Activated CD4-positive, alpha-beta memory T cell treated with anti-CD3 and anti-CD28 coated beads for 36 hours (primary cell): ENCODE measurements at regions of chr14 and their contacts with region 1.

Region 1: GRCh38 chr14:75522224-75522982 is at the start of gene BATF:
- DNase-seq: peak; percentile 89
- H3K4me3 Mint-ChIP-seq: peak within 1 kb of the TSS; percentile 99
- H3K27ac Mint-ChIP-seq: peak within 1 kb of the TSS; percentile 100
- H3K4me1 Mint-ChIP-seq: peaks cover 64% of the 10 kb centered on the region
- H3K27me3 Mint-ChIP-seq: no peaks in the 10 kb centered on the region
- total RNA-seq, gene BATF: 171 to 182 TPM

Region 2: GRCh38 chr14:75126679-75127473 is 395.5 kb before region 1 on chr14 and contains the start of gene NEK9:
- CTCF ChIA-PET with region 1: no interaction called
- POLR2A ChIA-PET with region 1: interaction called, 3 read pairs
- intact Hi-C with region 1: loop called (anchors 10 kb)
- DNase-seq: peak; percentile 94
- H3K4me3 Mint-ChIP-seq: peak within 1 kb of the TSS; percentile 99
- H3K27ac Mint-ChIP-seq: peak within 1 kb of the TSS; percentile 96
- H3K4me1 Mint-ChIP-seq: peaks cover 43% of the 10 kb centered on the region
- H3K27me3 Mint-ChIP-seq: no peaks in the 10 kb centered on the region
- total RNA-seq, gene NEK9: 51.8 to 56.4 TPM

Region 3: GRCh38 chr14:75487155-75487671 is 35.2 kb before region 1 on chr14:
- CTCF ChIA-PET with region 1: interaction called, 37 read pairs
- POLR2A ChIA-PET with region 1: interaction called, 4 read pairs
- intact Hi-C with region 1: loop called (anchors 5 kb)
- DNase-seq: peak; percentile 25
- H3K4me3 Mint-ChIP-seq: no peak overlapping the region
- H3K27ac Mint-ChIP-seq: peak overlapping the region; percentile 62
- H3K4me1 Mint-ChIP-seq: peaks cover 22% of the 10 kb centered on the region
- H3K27me3 Mint-ChIP-seq: peaks cover 2% of the 10 kb centered on the region

Region 4: GRCh38 chr14:75542588-75543091 is 20.2 kb after region 1 on chr14:
- CTCF ChIA-PET with region 1: interaction called, 88 read pairs
- POLR2A ChIA-PET with region 1: interaction called, 172 read pairs
- intact Hi-C with region 1: loop called (anchors 1 kb)
- DNase-seq: peak; percentile 95
- H3K4me3 Mint-ChIP-seq: peak overlapping the region; percentile 68
- H3K27ac Mint-ChIP-seq: peak overlapping the region; percentile 99
- H3K4me1 Mint-ChIP-seq: peaks cover 83% of the 10 kb centered on the region
- H3K27me3 Mint-ChIP-seq: no peaks in the 10 kb centered on the region

Region 5: DNA sequence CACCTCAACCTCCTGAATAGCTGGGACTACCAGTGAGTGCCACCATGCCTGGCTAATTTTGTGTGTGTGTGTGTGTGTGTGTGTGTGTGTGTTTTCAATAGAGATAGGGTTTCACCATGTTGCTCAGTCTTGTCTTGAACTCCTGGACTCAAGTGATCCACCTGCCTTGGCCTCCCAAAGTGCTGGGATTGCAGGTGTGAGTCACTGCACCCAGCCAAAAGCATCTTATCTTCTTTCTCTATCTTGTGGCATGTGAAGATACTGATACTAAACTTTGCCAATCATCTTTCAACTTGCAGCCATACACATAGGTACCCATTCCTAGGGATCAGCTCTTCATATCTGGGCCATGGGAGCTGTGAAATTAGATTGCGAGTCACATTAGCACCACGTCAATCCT is 33.4 kb after region 1 on chr14:
- CTCF ChIA-PET with region 1: interaction called, 83 read pairs
- POLR2A ChIA-PET with region 1: interaction called, 67 read pairs
- intact Hi-C with region 1: no loop called
- DNase-seq: peak; percentile 48
- H3K4me3 Mint-ChIP-seq: no peak overlapping the region
- H3K27ac Mint-ChIP-seq: peak overlapping the region; percentile 0
- H3K4me1 Mint-ChIP-seq: peaks cover 76% of the 10 kb centered on the region
- H3K27me3 Mint-ChIP-seq: no peaks in the 10 kb centered on the region

Region 6: DNA sequence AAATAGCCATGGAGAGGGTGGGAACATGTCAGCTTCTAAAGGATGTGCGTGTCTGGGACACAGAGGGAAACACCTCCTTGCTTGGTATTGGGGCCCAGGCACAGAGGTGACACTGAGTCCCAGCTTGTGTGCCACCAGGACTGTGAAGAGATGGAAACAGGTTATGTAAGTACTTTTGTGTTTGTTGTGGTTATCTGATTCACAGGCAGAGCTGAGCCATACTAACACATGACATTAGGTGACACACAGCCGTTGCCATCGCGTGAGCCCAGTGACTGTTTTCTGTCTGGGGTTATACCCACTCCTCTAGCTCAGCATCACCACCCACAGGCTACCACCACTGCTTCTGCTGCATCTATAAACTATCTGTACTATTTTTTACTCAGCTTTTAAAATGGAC is 43.9 kb after region 1 on chr14:
- CTCF ChIA-PET with region 1: interaction called, 83 read pairs
- POLR2A ChIA-PET with region 1: interaction called, 67 read pairs
- intact Hi-C with region 1: loop called (anchors 1 kb)
- DNase-seq: peak; percentile 94
- H3K4me3 Mint-ChIP-seq: peak overlapping the region; percentile 72
- H3K27ac Mint-ChIP-seq: peak overlapping the region; percentile 93
- H3K4me1 Mint-ChIP-seq: peaks cover 90% of the 10 kb centered on the region
- H3K27me3 Mint-ChIP-seq: no peaks in the 10 kb centered on the region

Region 7: DNA sequence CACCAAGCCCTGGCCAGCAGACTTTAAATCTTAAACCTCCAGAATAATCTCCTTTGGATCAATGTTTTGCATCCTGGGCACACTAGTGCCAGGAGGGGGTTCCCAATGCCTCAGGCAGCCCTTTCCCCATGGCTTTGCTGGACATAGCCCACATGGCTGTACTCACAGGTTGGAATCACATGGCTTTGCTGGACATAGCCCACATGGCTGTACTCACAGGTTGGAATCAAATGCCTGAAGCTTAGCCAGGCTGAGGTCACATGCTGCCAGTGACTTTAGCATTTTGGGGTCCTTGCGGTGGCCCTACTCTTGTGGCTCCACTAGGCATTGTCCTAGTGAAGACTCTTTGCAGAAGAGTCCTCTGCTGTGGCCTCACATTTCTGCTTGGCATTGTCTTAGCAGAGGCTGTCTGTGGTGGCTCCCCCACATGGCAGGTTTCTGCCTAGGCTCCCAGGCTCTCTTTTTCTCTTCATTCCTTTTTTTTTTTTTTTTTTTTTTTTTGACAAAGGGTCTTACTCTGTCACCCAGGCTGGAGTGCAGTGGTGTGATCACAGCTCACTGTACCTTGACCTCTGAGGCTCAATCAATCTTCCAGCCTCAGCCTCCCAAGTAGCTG is 69.0 kb after region 1 on chr14:
- CTCF ChIA-PET with region 1: no interaction called
- POLR2A ChIA-PET with region 1: no interaction called
- intact Hi-C with region 1: no loop called
- DNase-seq: no peak
- H3K4me3 Mint-ChIP-seq: no peak overlapping the region
- H3K27ac Mint-ChIP-seq: no peak overlapping the region
- H3K4me1 Mint-ChIP-seq: no peaks in the 10 kb centered on the region
- H3K27me3 Mint-ChIP-seq: no peaks in the 10 kb centered on the region

Region 8: GRCh38 chr14:75654127-75654732 is 131.8 kb after region 1 on chr14:
- CTCF ChIA-PET with region 1: interaction called, 16 read pairs
- POLR2A ChIA-PET with region 1: no interaction called
- intact Hi-C with region 1: loop called (anchors 1 kb)
- DNase-seq: peak; percentile 89
- H3K4me3 Mint-ChIP-seq: no peak overlapping the region
- H3K27ac Mint-ChIP-seq: no peak overlapping the region
- H3K4me1 Mint-ChIP-seq: peaks cover 16% of the 10 kb centered on the region
- H3K27me3 Mint-ChIP-seq: no peaks in the 10 kb centered on the region